ENCODE measurements at regions of chr9 and their contacts with region 1.

Region 1: DNA sequence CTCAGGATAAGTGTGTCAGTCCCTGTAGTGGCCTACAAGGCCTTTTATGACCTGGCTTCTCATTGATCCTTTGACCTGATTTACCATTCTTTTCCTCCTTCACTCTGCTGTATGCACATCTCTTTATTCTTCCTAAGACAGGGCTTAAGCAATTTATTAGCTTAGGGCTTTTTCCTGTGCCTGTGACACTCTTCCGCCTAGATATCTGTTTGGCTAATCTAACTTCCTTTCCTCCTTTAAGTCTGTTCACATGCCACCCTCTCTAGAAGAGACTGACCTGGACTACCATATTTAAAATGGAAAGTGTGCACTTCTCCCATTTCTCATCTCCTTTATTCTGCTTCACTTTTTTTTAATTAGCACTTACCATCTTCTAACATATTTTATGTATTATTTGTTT is 29.1 kb downstream of the FOCAD start:
- DNase-seq: no peak
- ATAC-seq: no peak
- H3K4me3 Mint-ChIP-seq: no peak overlapping the region
- H3K27ac Mint-ChIP-seq: no peak overlapping the region
- H3K4me1 Mint-ChIP-seq: no peaks in the 10 kb centered on the region
- H3K27me3 Mint-ChIP-seq: no peaks in the 10 kb centered on the region

Region 2: DNA sequence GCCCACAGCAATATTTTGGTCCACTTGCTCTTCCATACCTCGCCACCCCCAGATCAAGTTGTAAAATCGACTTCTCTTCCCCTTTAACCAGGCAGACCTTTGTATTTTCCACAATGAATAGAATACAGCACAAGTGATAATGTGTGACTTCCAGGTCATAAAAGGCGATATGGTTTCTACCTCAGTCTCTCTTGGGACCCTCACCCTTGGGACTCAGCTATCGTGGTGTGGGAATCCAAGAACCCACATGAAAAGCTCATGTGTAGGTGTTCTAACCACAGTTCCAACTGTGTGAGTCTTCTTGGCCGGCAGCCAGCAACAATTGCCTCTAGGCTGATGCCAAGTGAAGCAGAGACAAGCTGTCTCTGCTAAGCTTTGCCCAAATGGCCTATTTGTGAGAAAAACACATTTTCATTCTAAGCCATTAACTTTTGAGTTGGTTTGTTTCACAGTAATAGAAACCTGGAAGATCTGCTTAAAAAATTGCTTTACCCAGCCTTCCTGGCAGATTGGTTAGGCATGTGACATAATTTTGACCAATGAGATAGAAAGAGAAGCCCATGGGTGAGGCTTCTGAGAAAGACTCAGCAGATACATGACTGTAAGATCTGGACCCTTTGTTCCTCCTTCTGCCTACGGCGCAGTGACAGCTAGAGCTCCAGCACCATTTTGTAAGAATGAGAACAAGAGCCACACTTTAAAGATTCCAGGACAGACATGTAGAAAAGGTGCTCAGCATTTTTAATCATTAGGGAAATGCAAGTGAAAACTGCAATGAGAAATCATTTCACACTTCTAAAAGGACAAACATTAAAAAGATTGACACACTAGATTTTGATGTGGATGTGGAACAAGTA is 72.6 kb before region 1 on chr9:
- CTCF ChIA-PET with region 1: no interaction called
- POLR2A ChIA-PET with region 1: no interaction called
- intact Hi-C with region 1: loop called in 1 of 2 experiments (anchors 5 kb)
- DNase-seq: peak; percentile 87
- ATAC-seq: peak; percentile 96
- H3K4me3 Mint-ChIP-seq: peak overlapping the region; percentile 12
- H3K27ac Mint-ChIP-seq: peak overlapping the region; percentile 52
- H3K4me1 Mint-ChIP-seq: peaks cover 15% of the 10 kb centered on the region
- H3K27me3 Mint-ChIP-seq: peaks cover 14% of the 10 kb centered on the region

Region 3: DNA sequence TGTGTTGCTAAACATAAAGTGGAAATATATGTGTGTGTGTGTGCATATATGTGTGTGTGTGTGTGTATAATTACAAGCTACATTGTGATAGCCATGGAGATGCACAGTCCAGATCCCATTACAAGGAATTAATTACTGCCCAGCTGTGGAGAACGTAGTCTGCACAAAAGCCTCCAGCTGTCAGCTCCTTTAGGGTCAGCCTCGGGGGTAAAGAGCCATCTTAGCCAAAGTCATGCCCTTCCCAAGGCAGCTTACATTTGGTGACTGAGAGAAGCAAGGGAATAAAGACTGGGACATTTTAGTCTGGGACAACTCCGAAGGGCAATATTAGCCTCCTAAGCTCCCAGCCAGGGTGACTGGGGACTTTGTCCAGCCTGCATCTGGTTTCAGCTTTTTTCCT is 51.0 kb before region 1 on chr9:
- CTCF ChIA-PET with region 1: no interaction called
- POLR2A ChIA-PET with region 1: no interaction called
- intact Hi-C with region 1: loop called in 1 of 2 experiments (anchors 5 kb)
- DNase-seq: no peak
- ATAC-seq: no peak
- H3K4me3 Mint-ChIP-seq: no peak overlapping the region
- H3K27ac Mint-ChIP-seq: no peak overlapping the region
- H3K4me1 Mint-ChIP-seq: no peaks in the 10 kb centered on the region
- H3K27me3 Mint-ChIP-seq: no peaks in the 10 kb centered on the region

Region 4: DNA sequence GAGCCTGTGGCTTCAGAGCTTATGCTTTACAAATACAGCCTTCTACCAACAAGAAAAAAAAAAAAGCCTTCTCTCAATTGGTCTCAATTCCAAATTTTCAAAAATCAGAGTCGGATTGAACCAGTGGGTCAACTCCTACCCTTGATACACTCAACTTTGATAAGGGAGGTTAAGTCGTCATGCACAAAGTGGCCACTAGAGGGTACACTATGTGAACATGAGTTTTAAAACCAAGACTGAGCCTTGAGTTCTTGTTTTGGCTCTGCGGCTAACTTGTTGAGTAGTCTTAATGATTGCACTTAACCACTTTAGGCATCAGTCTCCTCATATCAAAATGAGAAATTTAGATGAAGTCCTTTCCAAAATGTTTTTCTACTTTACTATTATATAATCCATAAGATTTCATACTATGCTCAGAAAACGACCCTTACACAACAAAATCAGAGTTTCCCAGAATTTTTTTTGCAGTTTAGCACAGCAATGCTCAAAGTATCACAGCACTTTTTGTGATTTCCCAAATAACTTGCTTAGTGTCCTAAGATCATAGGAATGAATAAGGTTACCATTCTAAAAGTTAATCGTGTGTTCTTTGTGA is 996.4 kb after region 1 on chr9:
- CTCF ChIA-PET with region 1: no interaction called
- POLR2A ChIA-PET with region 1: no interaction called
- intact Hi-C with region 1: no loop called
- DNase-seq: peak; percentile 79
- ATAC-seq: peak; percentile 53
- H3K4me3 Mint-ChIP-seq: no peak overlapping the region
- H3K27ac Mint-ChIP-seq: no peak overlapping the region
- H3K4me1 Mint-ChIP-seq: peaks cover 19% of the 10 kb centered on the region
- H3K27me3 Mint-ChIP-seq: peaks cover 2% of the 10 kb centered on the region